Adrenal gland (tissue), 19 donors: ENCODE measurements at regions of chr4 and their contacts with region 1.

Region 1: GRCh38 chr4:119286377-119287002 is 35.4 kb downstream of the FABP2 start:
- DNase-seq: peak in 4 of 7 donors; percentile 13 to 43 (median 28)
- H3K4me3 ChIP-seq: no peak overlapping the region
- H3K27ac ChIP-seq: no peak overlapping the region
- H3K4me1 ChIP-seq: peaks cover 9 to 33% of the 10 kb centered on the region in 2 donors
- H3K27me3 ChIP-seq: no peaks in the 10 kb centered on the region
- CTCF ChIP-seq: peak; percentile 48 to 83 (median 74)
- POLR2A ChIP-seq: no peak

Region 2: DNA sequence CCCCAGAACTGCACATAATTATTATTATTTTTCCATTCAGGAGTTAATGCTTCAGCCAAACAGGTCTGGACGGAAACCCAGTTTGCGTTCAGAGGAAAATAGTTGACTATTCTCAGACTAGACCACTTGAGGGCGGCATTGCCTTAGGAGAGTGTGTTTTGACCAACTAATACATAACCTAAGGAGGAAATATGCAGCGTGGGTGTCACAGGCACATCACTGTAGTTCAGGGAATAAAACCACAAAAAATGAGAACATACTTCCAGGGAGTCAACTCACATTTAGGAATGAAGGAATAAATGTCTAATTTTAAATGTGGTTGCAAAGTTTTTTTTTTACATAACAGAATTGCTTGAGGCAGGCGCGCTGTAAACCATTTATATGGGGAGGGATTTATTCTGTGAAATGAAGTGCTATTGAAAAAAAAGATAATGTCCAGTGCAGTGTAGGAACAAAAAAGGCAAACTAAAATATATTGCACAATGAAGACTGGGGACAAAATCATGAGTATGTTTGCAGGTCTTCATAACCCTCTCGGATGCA is 304.6 kb before region 1 on chr4:
- intact Hi-C with region 1: loop called (anchors 5 to 10 kb)
- DNase-seq: peak; percentile 58 to 86 (median 66)
- H3K4me3 ChIP-seq: no peak overlapping the region
- H3K27ac ChIP-seq: no peak overlapping the region
- H3K4me1 ChIP-seq: peaks cover 0 to 4% of the 10 kb centered on the region in 2 donors
- H3K27me3 ChIP-seq: no peaks in the 10 kb centered on the region
- CTCF ChIP-seq: peak; percentile 62 to 93 (median 84)
- POLR2A ChIP-seq: no peak

Region 3: GRCh38 chr4:119041951-119042560 is 244.4 kb before region 1 on chr4:
- intact Hi-C with region 1: loop called in 1 of 2 experiments (anchors 5 kb)
- DNase-seq: peak; percentile 38 to 84 (median 60)
- H3K4me3 ChIP-seq: no peak overlapping the region
- H3K27ac ChIP-seq: peak overlapping the region in 2 of 5 donors; percentile 1 to 16
- H3K4me1 ChIP-seq: peaks cover 3 to 21% of the 10 kb centered on the region in 2 donors
- H3K27me3 ChIP-seq: no peaks in the 10 kb centered on the region
- CTCF ChIP-seq: peak; percentile 41 to 70 (median 66)
- POLR2A ChIP-seq: no peak

Region 4: GRCh38 chr4:119172223-119172622 is 114.3 kb before region 1 on chr4:
- intact Hi-C with region 1: no loop called
- DNase-seq: no peak
- H3K4me3 ChIP-seq: no peak overlapping the region
- H3K27ac ChIP-seq: no peak overlapping the region
- H3K4me1 ChIP-seq: no peaks in the 10 kb centered on the region
- H3K27me3 ChIP-seq: no peaks in the 10 kb centered on the region
- CTCF ChIP-seq: no peak
- POLR2A ChIP-seq: no peak

Region 5: GRCh38 chr4:119212234-119212963 is 74.1 kb before region 1 on chr4 and contains the start of gene USP53:
- intact Hi-C with region 1: loop called (anchors 5 to 10 kb)
- DNase-seq: peak; percentile 99
- H3K4me3 ChIP-seq: peak within 1 kb of the TSS; percentile 35 to 93 (median 74)
- H3K27ac ChIP-seq: peak within 1 kb of the TSS; percentile 71 to 97 (median 95)
- H3K4me1 ChIP-seq: peaks cover 0 to 19% of the 10 kb centered on the region in 2 donors
- H3K27me3 ChIP-seq: no peaks in the 10 kb centered on the region
- CTCF ChIP-seq: peak in 2 of 6 experiments; percentile 25 to 51
- POLR2A ChIP-seq: peak; percentile 93 to 98
- total RNA-seq, gene USP53: 7.0 to 78.9 (median 37.6) TPM